CD8-positive, alpha-beta T cell (primary cell): ENCODE measurements at regions of chr7 and their contacts with region 1.

Region 1: GRCh38 chr7:93245525-93246432 is 13.6 kb downstream of the VPS50 start:
- DNase-seq: peak in 2 of 9 experiments; percentile 42 to 56
- ATAC-seq: peak; percentile 72
- H3K4me3 ChIP-seq: peak overlapping the region in 1 of 2 experiments; percentile 6
- H3K4me3 Mint-ChIP-seq: peak overlapping the region; percentile 72
- H3K27ac ChIP-seq: no peak overlapping the region
- H3K27ac Mint-ChIP-seq: no peak overlapping the region
- H3K4me1 ChIP-seq: no peaks in the 10 kb centered on the region
- H3K4me1 Mint-ChIP-seq: peaks cover 14% of the 10 kb centered on the region
- H3K27me3 ChIP-seq: no peaks in the 10 kb centered on the region
- H3K27me3 Mint-ChIP-seq: no peaks in the 10 kb centered on the region
- CTCF ChIP-seq: peak; percentile 84

Region 2: DNA sequence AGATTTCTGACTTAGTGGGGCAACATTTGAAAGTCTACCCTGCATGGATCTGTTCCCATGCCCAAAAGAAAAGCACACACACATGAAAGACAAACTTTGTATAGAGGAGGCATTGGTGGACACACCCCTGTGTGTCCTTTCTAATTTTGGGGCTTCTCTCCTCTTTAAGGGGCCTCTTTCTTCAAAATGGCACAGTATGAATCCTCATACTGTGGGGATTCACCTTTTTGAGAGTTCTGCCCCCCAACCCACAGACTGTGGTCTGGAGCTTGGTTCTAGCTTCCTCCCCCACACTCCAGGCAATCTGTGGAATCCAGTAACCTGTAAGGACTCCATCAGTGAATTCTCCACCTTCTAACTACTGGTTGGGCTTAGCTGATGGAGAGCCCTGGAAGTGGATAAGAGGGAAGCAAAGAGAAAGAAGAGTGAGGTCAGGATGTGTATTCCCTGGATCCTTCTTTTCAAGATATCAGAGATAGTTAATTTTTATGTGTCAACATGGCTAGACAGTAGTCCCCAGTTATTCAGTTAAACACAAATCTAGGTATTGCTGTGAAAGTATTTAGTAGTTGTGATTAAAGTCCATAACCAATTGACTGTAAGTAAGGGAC is 377.0 kb before region 1 on chr7:
- CTCF ChIA-PET with region 1: no interaction called
- POLR2A ChIA-PET with region 1: no interaction called
- intact Hi-C with region 1: no loop called
- DNase-seq: no peak
- ATAC-seq: no peak
- H3K4me3 ChIP-seq: no peak overlapping the region
- H3K4me3 Mint-ChIP-seq: no peak overlapping the region
- H3K27ac ChIP-seq: no peak overlapping the region
- H3K27ac Mint-ChIP-seq: no peak overlapping the region
- H3K4me1 ChIP-seq: no peaks in the 10 kb centered on the region
- H3K4me1 Mint-ChIP-seq: peaks cover 3% of the 10 kb centered on the region
- H3K27me3 ChIP-seq: no peaks in the 10 kb centered on the region
- H3K27me3 Mint-ChIP-seq: peaks cover 2% of the 10 kb centered on the region
- CTCF ChIP-seq: no peak

Region 3: GRCh38 chr7:93108003-93108402 is 137.8 kb before region 1 on chr7:
- CTCF ChIA-PET with region 1: no interaction called
- POLR2A ChIA-PET with region 1: no interaction called
- intact Hi-C with region 1: no loop called
- DNase-seq: no peak
- ATAC-seq: no peak
- H3K4me3 ChIP-seq: no peak overlapping the region
- H3K4me3 Mint-ChIP-seq: no peak overlapping the region
- H3K27ac ChIP-seq: no peak overlapping the region
- H3K27ac Mint-ChIP-seq: no peak overlapping the region
- H3K4me1 ChIP-seq: no peaks in the 10 kb centered on the region
- H3K4me1 Mint-ChIP-seq: peaks cover 21% of the 10 kb centered on the region
- H3K27me3 ChIP-seq: no peaks in the 10 kb centered on the region
- H3K27me3 Mint-ChIP-seq: no peaks in the 10 kb centered on the region
- CTCF ChIP-seq: no peak

Region 4: DNA sequence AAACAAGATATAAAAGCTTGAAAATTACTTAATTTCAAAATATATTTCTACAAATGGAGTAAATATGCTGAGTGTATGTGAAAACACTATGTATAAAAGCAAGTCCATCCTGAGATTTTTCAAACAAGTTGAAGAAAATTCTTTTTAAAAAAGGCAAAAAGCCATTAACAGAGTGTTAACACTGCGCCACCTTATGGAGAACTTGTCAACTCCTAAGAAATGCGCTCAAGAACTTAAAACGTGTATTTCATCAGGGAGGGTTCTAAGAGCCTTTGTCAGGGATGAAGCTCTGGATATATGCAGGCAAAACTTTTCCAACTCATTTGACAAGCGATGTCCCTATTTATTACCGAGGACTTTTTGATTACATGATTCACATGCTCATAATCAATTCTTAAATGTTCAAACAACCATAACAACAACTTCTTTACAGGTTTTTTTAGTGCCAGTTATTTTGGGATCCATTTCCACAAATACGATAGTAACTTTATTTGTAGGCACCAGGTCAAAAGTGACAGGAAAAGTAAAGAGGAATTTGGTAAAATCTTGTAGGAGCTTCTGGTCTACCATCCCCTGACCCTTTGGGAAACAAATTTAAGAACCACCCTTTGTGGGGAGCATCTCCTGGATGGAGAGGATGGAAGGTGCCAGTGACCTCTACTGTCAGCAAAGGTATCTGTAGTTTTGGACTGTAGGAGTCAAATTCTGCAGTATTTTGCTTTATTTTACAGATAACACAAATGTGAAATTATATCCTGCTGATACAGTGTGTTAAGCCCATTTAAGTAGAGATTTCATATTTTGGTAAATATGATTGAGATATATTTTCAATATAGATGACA is 305.5 kb after region 1 on chr7:
- CTCF ChIA-PET with region 1: interaction called, 15 read pairs
- POLR2A ChIA-PET with region 1: no interaction called
- intact Hi-C with region 1: loop called (anchors 1 kb)
- DNase-seq: peak in 2 of 9 experiments; percentile 15 to 40
- ATAC-seq: no peak
- H3K4me3 ChIP-seq: no peak overlapping the region
- H3K4me3 Mint-ChIP-seq: no peak overlapping the region
- H3K27ac ChIP-seq: no peak overlapping the region
- H3K27ac Mint-ChIP-seq: no peak overlapping the region
- H3K4me1 ChIP-seq: no peaks in the 10 kb centered on the region
- H3K4me1 Mint-ChIP-seq: no peaks in the 10 kb centered on the region
- H3K27me3 ChIP-seq: no peaks in the 10 kb centered on the region
- H3K27me3 Mint-ChIP-seq: no peaks in the 10 kb centered on the region
- CTCF ChIP-seq: peak; percentile 50

Region 5: DNA sequence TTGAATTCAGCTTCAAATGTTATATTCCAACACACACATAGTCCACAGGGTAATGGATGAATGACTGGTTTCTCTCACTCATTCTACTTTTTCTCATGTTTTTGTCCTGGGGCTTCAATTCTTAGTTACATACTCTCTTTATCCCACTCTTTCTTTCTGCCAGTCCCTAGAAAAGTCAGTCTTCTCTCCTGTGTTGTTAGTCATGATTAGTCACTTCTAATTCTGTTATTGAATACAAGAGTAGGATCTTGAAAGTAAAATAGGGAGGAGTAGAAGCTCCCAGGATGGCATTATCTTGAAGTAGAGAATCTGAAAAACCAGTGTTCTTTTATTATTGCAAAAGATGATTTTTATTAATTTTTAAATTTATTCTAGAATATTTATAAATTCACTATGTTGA is 374.3 kb after region 1 on chr7:
- CTCF ChIA-PET with region 1: no interaction called
- POLR2A ChIA-PET with region 1: no interaction called
- intact Hi-C with region 1: no loop called
- DNase-seq: no peak
- ATAC-seq: no peak
- H3K4me3 ChIP-seq: no peak overlapping the region
- H3K4me3 Mint-ChIP-seq: no peak overlapping the region
- H3K27ac ChIP-seq: no peak overlapping the region
- H3K27ac Mint-ChIP-seq: no peak overlapping the region
- H3K4me1 ChIP-seq: no peaks in the 10 kb centered on the region
- H3K4me1 Mint-ChIP-seq: no peaks in the 10 kb centered on the region
- H3K27me3 ChIP-seq: no peaks in the 10 kb centered on the region
- H3K27me3 Mint-ChIP-seq: no peaks in the 10 kb centered on the region
- CTCF ChIP-seq: no peak

Region 6: DNA sequence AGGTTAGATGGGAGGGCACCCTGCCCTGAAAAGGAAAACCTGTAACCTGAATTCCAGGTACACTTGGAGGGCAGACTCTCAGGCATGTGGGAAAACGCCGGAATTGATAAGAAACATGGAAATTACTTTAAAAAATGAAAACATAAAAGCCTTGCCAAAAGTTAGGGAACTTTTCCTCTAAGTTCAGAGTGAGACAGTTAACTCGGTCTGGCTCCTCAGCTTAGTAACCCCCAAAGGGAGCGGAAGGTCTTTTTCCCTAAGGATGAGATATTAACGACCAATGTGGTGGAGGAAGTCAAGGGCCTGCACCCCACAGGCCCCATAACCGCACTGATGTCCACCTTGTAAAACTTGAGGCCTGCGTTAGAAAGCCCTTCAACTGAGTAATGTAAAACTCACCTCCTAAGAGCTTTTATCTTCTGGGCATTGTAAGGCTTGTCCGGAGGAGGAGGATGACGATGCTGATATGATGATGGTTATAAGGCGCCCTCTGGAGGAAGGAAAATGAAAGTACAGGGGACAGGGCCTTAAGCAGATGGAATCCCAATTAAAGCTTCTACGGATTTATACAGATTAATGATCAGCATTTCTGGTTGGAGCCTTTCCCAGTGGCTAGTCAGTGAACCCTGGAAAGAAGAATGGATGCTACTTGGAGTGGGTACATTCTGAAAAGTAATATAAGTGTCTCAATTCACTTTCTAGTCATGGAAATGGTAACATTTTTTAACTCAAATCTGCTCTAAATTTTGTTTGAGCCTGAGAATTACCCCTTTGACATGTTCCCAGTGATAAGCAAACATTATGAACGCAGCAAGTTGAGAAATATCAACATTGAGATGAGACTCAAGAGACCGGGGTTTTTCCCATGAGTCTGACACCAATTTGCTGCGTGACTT is 1149.6 kb after region 1 on chr7:
- CTCF ChIA-PET with region 1: no interaction called
- POLR2A ChIA-PET with region 1: no interaction called
- intact Hi-C with region 1: loop called (anchors 5 to 10 kb)
- DNase-seq: peak in 2 of 9 experiments; percentile 29 to 41
- ATAC-seq: peak; percentile 64
- H3K4me3 ChIP-seq: peak overlapping the region in 1 of 2 experiments; percentile 23
- H3K4me3 Mint-ChIP-seq: peak overlapping the region; percentile 67
- H3K27ac ChIP-seq: no peak overlapping the region
- H3K27ac Mint-ChIP-seq: no peak overlapping the region
- H3K4me1 ChIP-seq: peaks cover 8% of the 10 kb centered on the region
- H3K4me1 Mint-ChIP-seq: peaks cover 22% of the 10 kb centered on the region
- H3K27me3 ChIP-seq: peaks cover 0 to 4% of the 10 kb centered on the region in 2 experiments
- H3K27me3 Mint-ChIP-seq: peaks cover 25% of the 10 kb centered on the region
- CTCF ChIP-seq: peak; percentile 58

Region 7: DNA sequence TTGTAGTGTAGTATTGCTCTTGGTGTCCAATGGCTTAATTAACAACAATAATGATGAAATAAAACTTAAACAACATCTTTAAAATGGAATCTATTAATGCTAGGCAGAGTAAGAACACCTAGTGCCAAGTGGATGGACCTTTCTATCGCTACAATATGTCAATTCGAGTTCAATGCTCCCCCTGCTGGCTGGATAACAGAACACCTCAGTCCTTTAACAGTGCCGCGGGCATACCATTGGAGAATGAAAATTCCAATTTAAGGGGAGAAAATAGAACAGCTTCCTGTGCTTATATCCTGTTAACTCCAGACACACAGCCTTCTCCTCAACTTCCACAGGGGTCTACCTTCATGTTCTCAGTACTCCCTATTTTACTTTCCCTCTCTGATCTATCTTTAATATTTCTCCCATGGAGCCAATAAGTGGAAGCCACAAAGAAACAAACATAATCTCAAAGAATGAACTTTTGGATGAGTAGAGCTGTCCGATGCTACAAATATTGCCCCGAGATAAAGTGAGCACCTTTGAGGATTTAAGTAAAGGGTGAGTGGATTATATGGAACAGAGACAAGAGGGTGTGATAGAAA is 1190.3 kb after region 1 on chr7:
- CTCF ChIA-PET with region 1: no interaction called
- POLR2A ChIA-PET with region 1: no interaction called
- intact Hi-C with region 1: loop called (anchors 2 kb)
- DNase-seq: peak in 8 of 9 experiments; percentile 10 to 67 (median 50)
- ATAC-seq: peak; percentile 63
- H3K4me3 ChIP-seq: no peak overlapping the region
- H3K4me3 Mint-ChIP-seq: no peak overlapping the region
- H3K27ac ChIP-seq: no peak overlapping the region
- H3K27ac Mint-ChIP-seq: no peak overlapping the region
- H3K4me1 ChIP-seq: no peaks in the 10 kb centered on the region
- H3K4me1 Mint-ChIP-seq: no peaks in the 10 kb centered on the region
- H3K27me3 ChIP-seq: peaks cover 0 to 4% of the 10 kb centered on the region in 2 experiments
- H3K27me3 Mint-ChIP-seq: peaks cover 10% of the 10 kb centered on the region
- CTCF ChIP-seq: peak; percentile 85